H1 (cell line): ENCODE measurements at regions of chr16 and their contacts with region 1.

Region 1: GRCh38 chr16:68074850-68075555 is 10.2 kb upstream of the NFATC3 start:
- DNase-seq: peak in 1 of 2 experiments; percentile 28
- H3K4me3 ChIP-seq: no peak overlapping the region
- H3K27ac ChIP-seq: no peak overlapping the region
- H3K4me1 ChIP-seq: no peaks in the 10 kb centered on the region; a peak in 1 of 7 replicates
- H3K27me3 ChIP-seq: no peaks in the 10 kb centered on the region
- CTCF ChIP-seq: no peak
- EP300 ChIP-seq: no peak
- POLR2A ChIP-seq: no peak
- RAD21 ChIP-seq: no peak

Region 2: DNA sequence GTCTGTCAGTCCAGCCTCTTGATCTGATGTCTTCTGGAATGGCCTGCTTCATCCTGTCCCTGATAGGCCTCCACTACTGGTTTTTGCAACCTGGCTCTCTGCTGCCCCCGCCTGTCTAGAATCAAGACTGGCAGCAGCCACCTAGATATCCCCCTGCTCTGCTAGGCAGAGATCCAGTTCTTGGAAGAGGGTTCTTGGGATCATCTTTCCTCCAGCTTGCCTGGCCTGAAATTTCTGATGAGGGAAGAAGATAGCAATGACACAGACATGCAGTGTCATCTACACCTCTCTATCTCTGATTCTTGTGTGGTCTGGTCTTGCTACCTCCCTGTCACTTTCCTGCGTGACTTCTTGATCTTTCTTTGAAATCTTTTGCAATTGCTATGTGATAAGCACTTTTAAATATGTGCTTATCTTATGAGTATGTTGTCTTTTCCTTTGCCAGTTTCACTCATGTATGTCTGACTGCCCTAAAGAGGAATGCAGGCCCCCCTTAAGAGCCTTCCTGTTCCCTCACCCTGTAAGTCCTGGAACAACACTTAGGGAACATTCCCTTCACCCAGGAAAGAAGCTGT is 10.1 kb before region 1 on chr16:
- CTCF ChIA-PET with region 1: interaction called, 26 read pairs
- POLR2A ChIA-PET with region 1: interaction called, 5 read pairs
- DNase-seq: peak in 1 of 2 experiments; percentile 85
- H3K4me3 ChIP-seq: no peak overlapping the region
- H3K27ac ChIP-seq: no peak overlapping the region
- H3K4me1 ChIP-seq: no peaks in the 10 kb centered on the region
- H3K27me3 ChIP-seq: no peaks in the 10 kb centered on the region; a peak in 1 of 7 replicates
- CTCF ChIP-seq: peak; percentile 74 to 88 (median 81)
- EP300 ChIP-seq: no peak
- POLR2A ChIP-seq: no peak
- RAD21 ChIP-seq: peak; percentile 70 to 80

Region 3: GRCh38 chr16:68113059-68113761 is 38.2 kb after region 1 on chr16:
- CTCF ChIA-PET with region 1: no interaction called
- POLR2A ChIA-PET with region 1: no interaction called
- DNase-seq: no peak
- H3K4me3 ChIP-seq: no peak overlapping the region
- H3K27ac ChIP-seq: no peak overlapping the region
- H3K4me1 ChIP-seq: peaks cover 0 to 5% (median 0%) of the 10 kb centered on the region in 4 experiments; a peak in 1 of 7 replicates
- H3K27me3 ChIP-seq: no peaks in the 10 kb centered on the region
- CTCF ChIP-seq: no peak
- EP300 ChIP-seq: no peak
- POLR2A ChIP-seq: no peak
- RAD21 ChIP-seq: no peak